Activated T-helper 1 cell treated with anti-CD3 and anti-CD28 coated beads, Interleukin-12 subunit alpha, Interleukin-12 subunit beta, Interleukin-2, Interleukin-4 antibody, amounts not matched to agents 30 ng/mL and 10 ng/mL and 1 ng/mL, durations not matched to agents 14 hours and 24 hours and 36 hours (primary cell): ENCODE measurements at regions of chr2 and their contacts with region 1.

Region 1: GRCh38 chr2:200713003-200713703 is 98.6 kb upstream of the BZW1 start:
- DNase-seq: peak; percentile 89
- H3K4me3 Mint-ChIP-seq: peak overlapping the region; percentile 79
- H3K27ac Mint-ChIP-seq: peak overlapping the region; percentile 99
- H3K4me1 Mint-ChIP-seq: peaks cover 44% of the 10 kb centered on the region
- H3K27me3 Mint-ChIP-seq: no peaks in the 10 kb centered on the region

Region 2: DNA sequence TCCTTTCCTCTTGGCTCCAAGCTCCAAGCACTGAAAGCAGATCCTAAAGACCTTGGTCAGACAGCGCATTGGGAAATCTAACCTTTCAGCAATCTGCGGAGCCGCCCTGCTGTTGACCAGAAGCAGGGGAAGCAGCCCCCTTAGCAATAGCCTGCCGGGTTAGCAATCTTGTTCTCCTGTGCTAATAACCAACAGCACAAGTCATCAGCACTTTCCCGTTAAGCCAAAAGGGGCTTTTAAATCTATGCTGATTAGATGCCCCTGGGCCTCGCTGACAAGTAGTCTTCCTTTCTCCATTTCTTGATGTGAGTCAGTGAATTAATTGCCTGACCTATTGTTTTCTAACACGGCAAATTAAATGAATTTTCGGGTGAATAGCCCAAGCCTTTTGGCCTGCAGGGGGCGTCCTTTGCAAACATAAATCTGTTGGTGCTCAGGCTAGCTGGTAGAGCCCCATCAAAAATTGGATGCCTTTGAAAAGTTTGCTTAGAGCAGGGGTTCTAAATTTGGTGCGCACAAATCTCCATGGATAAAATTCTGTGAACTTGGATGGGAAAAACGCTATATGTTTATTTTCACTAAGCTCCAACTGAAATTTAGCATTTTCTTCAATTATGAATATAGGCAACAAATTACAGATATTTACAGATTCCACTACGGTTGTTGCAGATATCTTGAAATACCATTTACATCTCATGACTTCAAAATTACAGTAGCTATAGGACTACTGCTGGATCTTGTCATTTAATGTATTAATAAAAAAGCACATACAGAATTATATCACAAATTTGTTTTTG is 733.1 kb before region 1 on chr2:
- intact Hi-C with region 1: loop called (anchors 1 kb)
- DNase-seq: peak; percentile 62
- H3K4me3 Mint-ChIP-seq: no peak overlapping the region
- H3K27ac Mint-ChIP-seq: no peak overlapping the region
- H3K4me1 Mint-ChIP-seq: peaks cover 28% of the 10 kb centered on the region
- H3K27me3 Mint-ChIP-seq: no peaks in the 10 kb centered on the region

Region 3: DNA sequence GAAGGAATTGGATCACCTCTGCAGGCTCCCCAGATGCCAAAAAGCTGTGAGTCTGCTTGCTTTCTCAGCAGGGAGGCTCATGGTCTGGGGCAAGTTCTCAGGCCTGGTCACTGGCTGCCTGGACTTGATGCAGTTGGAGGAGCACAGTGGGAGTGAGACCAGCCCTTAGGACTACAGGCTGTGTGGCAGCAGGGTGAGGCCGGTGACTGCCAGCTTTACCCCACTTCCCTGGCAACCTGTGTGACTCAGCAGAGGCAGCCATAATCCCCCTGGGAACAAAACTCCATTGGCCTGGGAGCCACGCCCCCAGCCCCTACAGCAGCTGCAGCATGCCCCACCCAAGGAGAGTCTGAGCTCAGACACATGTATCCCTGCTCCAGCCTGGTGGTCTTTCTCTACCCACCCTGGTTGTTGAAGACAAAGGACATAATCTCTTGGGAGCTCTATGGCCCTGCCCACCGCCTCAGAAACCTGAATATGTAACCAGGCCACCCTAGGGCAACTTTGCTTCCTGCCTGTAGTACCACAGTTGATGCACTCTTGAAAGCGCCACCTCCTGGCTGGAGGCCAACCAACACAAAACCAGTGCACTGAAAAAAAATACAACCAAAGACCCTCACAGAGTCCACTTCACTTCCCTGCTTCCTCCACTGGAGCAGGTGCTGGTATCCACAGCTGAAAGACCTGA is 513.4 kb before region 1 on chr2:
- intact Hi-C with region 1: no loop called
- DNase-seq: no peak
- H3K4me3 Mint-ChIP-seq: no peak overlapping the region
- H3K27ac Mint-ChIP-seq: no peak overlapping the region
- H3K4me1 Mint-ChIP-seq: no peaks in the 10 kb centered on the region
- H3K27me3 Mint-ChIP-seq: peaks cover 10% of the 10 kb centered on the region

Region 4: GRCh38 chr2:200471324-200471848 is 241.8 kb before region 1 on chr2:
- intact Hi-C with region 1: loop called (anchors 5 kb)
- DNase-seq: no peak
- H3K4me3 Mint-ChIP-seq: no peak overlapping the region
- H3K27ac Mint-ChIP-seq: peak overlapping the region; percentile 47
- H3K4me1 Mint-ChIP-seq: peaks cover 36% of the 10 kb centered on the region
- H3K27me3 Mint-ChIP-seq: no peaks in the 10 kb centered on the region

Region 5: GRCh38 chr2:200735061-200735460 is 21.9 kb after region 1 on chr2:
- intact Hi-C with region 1: loop called (anchors 1 kb)
- DNase-seq: no peak
- H3K4me3 Mint-ChIP-seq: no peak overlapping the region
- H3K27ac Mint-ChIP-seq: no peak overlapping the region
- H3K4me1 Mint-ChIP-seq: peaks cover 15% of the 10 kb centered on the region
- H3K27me3 Mint-ChIP-seq: peaks cover 2% of the 10 kb centered on the region

Region 6: DNA sequence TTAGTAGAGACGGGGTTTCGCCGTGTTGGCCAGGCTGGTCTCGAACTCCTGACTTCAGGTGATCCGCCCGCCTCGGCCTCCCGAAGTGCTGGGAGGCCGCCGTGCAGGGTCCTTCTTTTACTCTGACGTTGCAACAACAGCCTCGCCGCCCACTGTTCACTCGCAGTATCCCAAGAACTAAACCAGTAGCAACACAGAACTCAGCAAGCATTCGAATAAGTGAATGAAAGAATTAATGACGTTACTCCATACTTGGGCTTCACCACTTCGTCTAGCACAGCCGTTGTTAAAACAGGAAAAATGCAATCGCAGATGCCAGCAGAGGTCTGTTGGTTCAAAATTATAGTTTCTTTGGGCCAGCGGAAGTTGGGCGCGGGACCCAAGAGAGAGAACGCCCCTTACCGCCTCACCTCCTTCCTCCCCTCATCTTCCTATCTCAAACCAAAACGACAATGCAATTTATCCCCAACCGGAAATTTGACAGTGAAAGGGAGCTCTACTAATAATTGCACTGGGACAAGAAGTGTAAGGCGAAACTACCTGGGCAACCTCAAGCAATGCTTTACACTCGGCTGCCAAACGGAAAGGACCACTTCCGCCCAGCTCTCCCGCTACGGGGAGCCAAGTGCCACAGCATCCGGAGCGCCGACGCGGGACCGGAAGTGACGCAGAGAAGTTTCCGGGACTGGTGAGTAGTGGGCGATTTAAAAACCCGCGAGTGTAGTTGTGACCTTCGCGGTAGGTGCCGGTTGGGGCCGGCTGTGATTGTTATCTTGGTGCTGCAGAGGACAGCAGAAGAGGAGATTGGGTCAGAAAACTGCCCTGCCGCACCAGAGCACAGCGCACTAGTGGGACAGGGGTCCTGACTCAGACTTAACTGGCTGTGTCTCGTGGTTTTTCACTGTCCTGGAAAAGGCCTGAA is 175.8 kb after region 1 on chr2 and contains the starts of genes NIF3L1 and PPIL3:
- intact Hi-C with region 1: loop called (anchors 1 kb)
- DNase-seq: peak; percentile 96
- H3K4me3 Mint-ChIP-seq: peak within 1 kb of the TSS; percentile 97
- H3K27ac Mint-ChIP-seq: peak within 1 kb of the TSS; percentile 99
- H3K4me1 Mint-ChIP-seq: peaks cover 54% of the 10 kb centered on the region
- H3K27me3 Mint-ChIP-seq: no peaks in the 10 kb centered on the region
- total RNA-seq, gene NIF3L1: 26.6 and 27.3 TPM in 2 replicates
- total RNA-seq, gene PPIL3: 44.2 TPM in 2 replicates

Region 7: GRCh38 chr2:201176081-201176481 is 462.9 kb after region 1 on chr2:
- intact Hi-C with region 1: loop called (anchors 2 kb)
- DNase-seq: no peak
- H3K4me3 Mint-ChIP-seq: no peak overlapping the region
- H3K27ac Mint-ChIP-seq: no peak overlapping the region
- H3K4me1 Mint-ChIP-seq: peaks cover 17% of the 10 kb centered on the region
- H3K27me3 Mint-ChIP-seq: no peaks in the 10 kb centered on the region